ENCODE measurements at regions of chr3 and their contacts with region 1.

Region 1: GRCh38 chr3:111967651-111968274 is 11.1 kb upstream of the ABHD10 start:
- DNase-seq: peak; percentile 83
- ATAC-seq: peak; percentile 90
- H3K4me3 ChIP-seq: no peak overlapping the region
- H3K27ac ChIP-seq: no peak overlapping the region
- H3K4me1 ChIP-seq: peaks cover 1% of the 10 kb centered on the region; the same call in 1 of the 2 replicates
- H3K27me3 ChIP-seq: no peaks in the 10 kb centered on the region
- CTCF ChIP-seq: peak; percentile 90
- POLR2A ChIP-seq: peak; percentile 39; the same call in 1 of the 2 replicates
- RAD21 ChIP-seq: peak; percentile 96

Region 2: GRCh38 chr3:111668912-111669488 is 298.8 kb before region 1 on chr3:
- CTCF ChIA-PET with region 1: interaction called, 3 read pairs
- POLR2A ChIA-PET with region 1: no interaction called
- dilution Hi-C with region 1: no loop called
- in situ Hi-C with region 1: no loop called
- intact Hi-C with region 1: loop called (anchors 5 kb)
- DNase-seq: peak; percentile 76
- ATAC-seq: peak; percentile 76
- H3K4me3 ChIP-seq: no peak overlapping the region
- H3K27ac ChIP-seq: no peak overlapping the region
- H3K4me1 ChIP-seq: peaks cover 5% of the 10 kb centered on the region
- H3K27me3 ChIP-seq: no peaks in the 10 kb centered on the region
- CTCF ChIP-seq: peak; percentile 88
- POLR2A ChIP-seq: no peak
- RAD21 ChIP-seq: peak; percentile 87

Region 3: GRCh38 chr3:111895079-111895478 is 72.7 kb before region 1 on chr3:
- CTCF ChIA-PET with region 1: interaction called, 28 read pairs
- POLR2A ChIA-PET with region 1: no interaction called
- dilution Hi-C with region 1: no loop called
- in situ Hi-C with region 1: no loop called
- intact Hi-C with region 1: loop called (anchors 1 kb)
- DNase-seq: peak; percentile 76
- ATAC-seq: peak; percentile 94
- H3K4me3 ChIP-seq: no peak overlapping the region
- H3K27ac ChIP-seq: no peak overlapping the region
- H3K4me1 ChIP-seq: no peaks in the 10 kb centered on the region
- H3K27me3 ChIP-seq: no peaks in the 10 kb centered on the region
- CTCF ChIP-seq: peak; percentile 73
- POLR2A ChIP-seq: 0 out of 2 replicates have a peak, but pooled peaks have one; percentile 33
- RAD21 ChIP-seq: peak; percentile 82

Region 4: GRCh38 chr3:112032098-112032731 is 64.5 kb after region 1 on chr3:
- CTCF ChIA-PET with region 1: no interaction called
- POLR2A ChIA-PET with region 1: no interaction called
- dilution Hi-C with region 1: no loop called
- in situ Hi-C with region 1: no loop called
- intact Hi-C with region 1: no loop called
- DNase-seq: no peak
- ATAC-seq: no peak
- H3K4me3 ChIP-seq: no peak overlapping the region
- H3K27ac ChIP-seq: no peak overlapping the region
- H3K4me1 ChIP-seq: no peaks in the 10 kb centered on the region
- H3K27me3 ChIP-seq: no peaks in the 10 kb centered on the region
- CTCF ChIP-seq: no peak
- POLR2A ChIP-seq: no peak
- RAD21 ChIP-seq: no peak

Region 5: DNA sequence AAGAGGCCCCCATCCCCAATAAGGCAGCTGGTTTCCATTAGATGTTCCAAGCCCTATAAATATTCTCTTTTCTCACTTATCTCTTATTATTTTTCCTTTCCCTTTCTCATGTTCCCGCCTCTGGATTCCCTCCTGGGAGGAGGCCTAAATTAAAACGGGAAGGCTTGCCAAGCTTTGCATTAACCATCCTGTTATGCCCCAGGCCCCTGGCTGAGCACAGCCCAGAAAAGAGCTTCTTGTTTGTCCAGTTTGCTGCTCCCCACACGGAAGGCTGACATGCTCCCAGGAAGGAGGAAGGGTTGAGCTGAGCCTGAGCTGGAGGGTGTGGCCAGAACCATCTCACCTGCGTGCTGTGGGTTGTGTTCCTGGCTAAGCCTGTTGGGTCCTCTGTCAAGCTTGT is 1180.5 kb after region 1 on chr3:
- CTCF ChIA-PET with region 1: no interaction called
- POLR2A ChIA-PET with region 1: no interaction called
- dilution Hi-C with region 1: no loop called
- in situ Hi-C with region 1: no loop called
- intact Hi-C with region 1: no loop called
- DNase-seq: no peak
- ATAC-seq: no peak
- H3K4me3 ChIP-seq: no peak overlapping the region
- H3K27ac ChIP-seq: no peak overlapping the region
- H3K4me1 ChIP-seq: peaks cover 4% of the 10 kb centered on the region; the same call in 1 of the 2 replicates
- H3K27me3 ChIP-seq: peaks cover 26% of the 10 kb centered on the region
- CTCF ChIP-seq: no peak
- POLR2A ChIP-seq: no peak
- RAD21 ChIP-seq: no peak